ENCODE measurements at regions of chr9 and their contacts with region 1.

Region 1: DNA sequence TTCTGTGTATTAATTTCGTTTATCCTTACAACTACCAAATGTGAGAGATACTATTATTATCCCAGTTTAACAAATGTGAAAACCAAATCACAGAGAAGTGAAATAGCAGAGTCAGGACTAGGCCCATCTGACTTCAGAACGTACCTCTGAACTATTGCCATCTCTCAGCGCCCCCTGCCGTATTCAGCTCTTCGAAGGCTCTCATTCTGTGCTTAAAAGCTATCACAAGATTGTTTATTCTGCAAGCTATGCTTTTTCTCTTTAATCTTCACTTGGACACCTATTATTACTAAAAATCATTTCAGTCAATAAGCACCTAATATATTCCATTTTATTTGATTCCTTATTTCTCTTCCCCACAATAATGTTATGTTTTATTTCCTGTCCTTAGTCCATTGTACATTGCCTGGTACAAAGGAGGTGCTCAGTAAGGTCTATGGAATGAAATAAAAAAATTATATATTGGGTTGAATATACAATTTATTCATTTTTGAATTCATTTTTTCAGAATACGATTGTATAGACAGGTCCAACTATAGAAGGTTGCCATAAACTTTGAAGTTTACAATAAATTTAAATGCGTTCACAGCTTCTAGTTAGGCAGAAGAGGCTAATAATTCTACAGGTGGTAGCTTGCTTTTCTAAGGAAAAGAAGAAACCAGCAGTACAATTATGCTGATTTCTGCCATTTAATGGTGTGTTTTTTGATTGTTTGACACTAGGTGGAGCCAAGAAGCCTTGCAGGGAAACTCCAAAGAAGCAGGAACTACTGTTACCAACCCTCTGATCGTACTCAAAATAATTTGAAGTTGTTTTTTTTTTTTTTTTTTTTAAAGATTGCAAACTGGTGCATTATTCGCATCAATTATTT is 202.2 kb upstream of the DMRTA1 start:
- DNase-seq: no peak
- H3K4me3 ChIP-seq: no peak overlapping the region
- H3K27ac ChIP-seq: no peak overlapping the region
- H3K4me1 ChIP-seq: no peaks in the 10 kb centered on the region
- H3K27me3 ChIP-seq: no peaks in the 10 kb centered on the region
- CTCF ChIP-seq: peak in 2 of 3 experiments; percentile 2 to 18
- POLR2A ChIP-seq: no peak

Region 2: GRCh38 chr9:21812946-21813568 is 431.3 kb before region 1 on chr9:
- intact Hi-C with region 1: loop called (anchors 5 kb)
- DNase-seq: no peak
- H3K4me3 ChIP-seq: no peak overlapping the region
- H3K27ac ChIP-seq: no peak overlapping the region
- H3K4me1 ChIP-seq: peaks cover 37% of the 10 kb centered on the region
- H3K27me3 ChIP-seq: no peaks in the 10 kb centered on the region
- CTCF ChIP-seq: peak; percentile 61 to 78 (median 63)
- POLR2A ChIP-seq: no peak

Region 3: DNA sequence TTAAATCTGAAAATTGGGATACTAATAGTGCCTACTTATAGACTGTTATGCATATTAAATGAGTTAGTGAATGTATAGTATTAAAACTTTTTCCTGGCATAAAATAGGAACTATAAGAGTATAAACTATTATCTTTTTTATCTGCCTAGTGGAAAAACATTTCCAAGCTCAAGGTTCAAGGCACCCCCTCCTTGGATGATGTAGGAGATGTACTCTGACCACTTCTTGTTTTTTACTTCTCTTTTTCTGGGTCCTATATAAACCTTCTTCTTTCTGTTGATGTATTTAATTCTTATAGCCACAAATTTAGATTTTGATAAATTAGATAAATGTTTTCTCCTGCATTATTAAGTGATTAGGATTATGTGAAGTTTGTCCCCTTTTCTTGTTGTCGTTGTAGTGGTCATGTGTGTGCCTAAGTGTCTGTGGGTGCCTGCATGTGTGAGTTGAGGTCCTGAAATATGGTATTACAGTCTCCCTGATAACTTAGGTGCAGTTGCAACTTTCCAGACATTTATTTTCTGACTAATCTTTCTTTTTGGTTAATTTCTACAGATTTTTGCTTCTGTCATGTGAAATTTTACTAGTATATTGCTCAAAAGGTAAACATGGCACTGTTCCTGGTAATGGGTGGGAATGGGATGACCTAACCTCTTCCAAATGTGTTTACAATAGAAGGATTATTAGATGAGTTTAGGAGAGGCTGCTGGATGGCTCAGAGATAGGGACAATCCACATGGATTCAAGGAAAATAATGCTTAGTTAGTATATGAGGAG is 74.5 kb before region 1 on chr9:
- intact Hi-C with region 1: no loop called
- DNase-seq: no peak
- H3K4me3 ChIP-seq: no peak overlapping the region
- H3K27ac ChIP-seq: no peak overlapping the region
- H3K4me1 ChIP-seq: no peaks in the 10 kb centered on the region
- H3K27me3 ChIP-seq: no peaks in the 10 kb centered on the region
- CTCF ChIP-seq: no peak
- POLR2A ChIP-seq: no peak

Region 4: DNA sequence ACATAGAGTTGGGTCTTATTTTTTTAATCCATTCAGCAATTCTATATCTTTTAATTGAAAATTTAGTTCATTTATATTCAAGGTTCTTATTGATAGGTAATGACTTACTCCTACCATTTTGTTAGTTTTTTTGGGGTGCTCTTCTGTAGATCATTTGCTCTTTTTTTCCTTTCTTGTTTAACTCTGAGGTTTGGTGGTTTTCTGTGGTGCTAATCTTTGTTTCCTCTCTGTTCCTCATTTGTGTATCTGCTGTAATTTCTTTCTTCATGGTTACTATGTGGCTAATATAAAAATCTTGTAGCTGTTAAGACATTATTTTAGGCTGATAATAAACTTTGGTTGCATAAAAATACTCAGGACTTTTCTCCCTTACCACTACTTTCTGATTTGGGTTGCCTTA is 20.7 kb after region 1 on chr9:
- intact Hi-C with region 1: no loop called
- DNase-seq: no peak
- H3K4me3 ChIP-seq: no peak overlapping the region
- H3K27ac ChIP-seq: no peak overlapping the region
- H3K4me1 ChIP-seq: no peaks in the 10 kb centered on the region
- H3K27me3 ChIP-seq: no peaks in the 10 kb centered on the region
- CTCF ChIP-seq: no peak
- POLR2A ChIP-seq: no peak